ENCODE measurements at regions of chr2 and their contacts with region 1.

Region 1: GRCh38 chr2:171522052-171522787 is at the start of gene CYBRD1:
- DNase-seq: peak; percentile 95
- ATAC-seq: peak; percentile 94
- total RNA-seq, gene CYBRD1: 280 TPM

Region 2: DNA sequence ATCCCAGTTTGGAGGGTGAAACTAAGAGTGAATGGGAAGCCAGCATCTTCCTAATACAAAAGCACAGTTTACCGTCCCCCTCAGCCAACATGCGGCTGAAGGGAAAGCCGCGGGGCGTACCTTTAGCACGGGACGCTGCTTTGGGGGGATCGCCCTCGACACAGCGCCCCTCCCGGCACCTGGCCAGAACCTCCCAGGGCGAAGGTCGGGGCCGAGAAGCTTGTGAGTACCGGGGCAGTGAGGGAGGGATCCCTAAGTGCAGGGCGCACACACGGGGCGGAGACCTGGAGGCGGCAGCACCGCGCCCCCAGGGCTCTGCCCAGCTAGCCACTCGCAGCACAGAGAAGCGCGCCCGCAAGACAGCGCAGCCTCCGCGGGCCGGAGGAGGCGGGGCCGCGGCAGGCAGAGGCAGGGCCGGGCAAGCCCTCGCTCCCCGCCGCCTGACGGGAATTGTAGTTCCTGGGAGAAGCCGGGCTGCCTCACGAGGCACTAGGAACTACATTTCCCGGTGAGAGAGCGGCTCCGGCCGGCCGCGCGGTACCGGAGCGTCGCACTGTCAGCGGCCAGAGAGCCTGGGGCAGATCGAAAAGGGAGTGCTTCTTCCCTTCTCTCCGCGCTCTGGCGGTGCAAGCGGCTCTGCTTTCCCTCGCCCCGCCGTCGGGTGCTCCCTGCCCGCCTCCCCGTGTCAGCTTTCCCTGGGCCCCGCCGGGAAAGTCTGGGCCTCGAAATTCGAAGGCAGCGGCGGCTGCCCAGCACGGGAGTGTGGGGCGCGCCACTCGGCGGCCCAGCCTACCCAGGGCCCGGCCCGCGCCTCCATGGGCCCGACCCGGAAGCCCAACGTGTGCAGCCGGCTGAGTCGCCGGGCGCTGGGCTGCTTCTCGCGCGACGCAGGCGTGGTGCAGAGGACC is 88.2 kb before region 1 on chr2 and contains the starts of genes DCAF17 and METTL8:
- intact Hi-C with region 1: loop called (anchors 5 kb)
- DNase-seq: peak; percentile 96
- ATAC-seq: peak; percentile 99
- total RNA-seq, gene DCAF17: 24.0 TPM
- total RNA-seq, gene METTL8: 23.8 TPM

Region 3: DNA sequence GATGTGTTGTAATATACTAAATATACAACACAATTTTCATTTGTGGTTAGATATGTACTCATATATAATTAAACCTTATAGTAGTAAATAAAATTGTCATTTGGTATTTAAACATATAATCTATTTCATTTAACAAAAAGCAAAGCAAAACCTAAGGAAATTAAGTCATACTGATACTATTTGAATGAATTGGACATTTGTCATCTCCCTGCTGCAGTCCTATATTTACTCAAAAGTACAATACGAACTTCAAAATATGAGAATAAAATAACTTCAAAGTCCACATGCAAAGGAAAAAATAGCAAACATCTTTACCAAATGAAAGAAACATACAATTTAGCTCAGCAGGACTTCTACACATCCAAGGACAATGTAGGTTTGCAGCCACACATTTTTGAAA is 388.3 kb after region 1 on chr2:
- intact Hi-C with region 1: no loop called
- DNase-seq: no peak
- ATAC-seq: no peak